ENCODE measurements at regions of chr20 and their contacts with region 1.

Region 1: GRCh38 chr20:59955132-59955796 is 3.0 kb upstream of the CDH26 start:
- DNase-seq: peak in 2 of 14 experiments; percentile 21 to 35
- ATAC-seq: no peak
- H3K4me3 ChIP-seq: no peak overlapping the region
- H3K4me3 Mint-ChIP-seq: no peak overlapping the region
- H3K27ac ChIP-seq: no peak overlapping the region
- H3K27ac Mint-ChIP-seq: no peak overlapping the region
- H3K4me1 ChIP-seq: no peaks in the 10 kb centered on the region
- H3K4me1 Mint-ChIP-seq: no peaks in the 10 kb centered on the region
- H3K27me3 ChIP-seq: no peaks in the 10 kb centered on the region
- H3K27me3 Mint-ChIP-seq: no peaks in the 10 kb centered on the region
- CTCF ChIP-seq: no peak

Region 2: GRCh38 chr20:59940174-59940971 is 14.9 kb before region 1 on chr20 and contains the starts of genes FAM217B and PPP1R3D:
- CTCF ChIA-PET with region 1: interaction called, 5 read pairs
- POLR2A ChIA-PET with region 1: interaction called, 33 read pairs
- intact Hi-C with region 1: no loop called
- DNase-seq: peak; percentile 72 to 95 (median 88)
- ATAC-seq: peak; percentile 97
- H3K4me3 ChIP-seq: peak within 1 kb of the TSS; percentile 70
- H3K4me3 Mint-ChIP-seq: peak within 1 kb of the TSS; percentile 99
- H3K27ac ChIP-seq: peak within 1 kb of the TSS; percentile 78 to 91
- H3K27ac Mint-ChIP-seq: peak within 1 kb of the TSS; percentile 99
- H3K4me1 ChIP-seq: peaks cover 23% of the 10 kb centered on the region
- H3K4me1 Mint-ChIP-seq: peaks cover 58% of the 10 kb centered on the region
- H3K27me3 ChIP-seq: no peaks in the 10 kb centered on the region
- H3K27me3 Mint-ChIP-seq: no peaks in the 10 kb centered on the region
- CTCF ChIP-seq: no peak
- total RNA-seq, gene FAM217B: 23.1 to 23.7 TPM
- total RNA-seq, gene PPP1R3D: 5.1 to 5.4 TPM

Region 3: DNA sequence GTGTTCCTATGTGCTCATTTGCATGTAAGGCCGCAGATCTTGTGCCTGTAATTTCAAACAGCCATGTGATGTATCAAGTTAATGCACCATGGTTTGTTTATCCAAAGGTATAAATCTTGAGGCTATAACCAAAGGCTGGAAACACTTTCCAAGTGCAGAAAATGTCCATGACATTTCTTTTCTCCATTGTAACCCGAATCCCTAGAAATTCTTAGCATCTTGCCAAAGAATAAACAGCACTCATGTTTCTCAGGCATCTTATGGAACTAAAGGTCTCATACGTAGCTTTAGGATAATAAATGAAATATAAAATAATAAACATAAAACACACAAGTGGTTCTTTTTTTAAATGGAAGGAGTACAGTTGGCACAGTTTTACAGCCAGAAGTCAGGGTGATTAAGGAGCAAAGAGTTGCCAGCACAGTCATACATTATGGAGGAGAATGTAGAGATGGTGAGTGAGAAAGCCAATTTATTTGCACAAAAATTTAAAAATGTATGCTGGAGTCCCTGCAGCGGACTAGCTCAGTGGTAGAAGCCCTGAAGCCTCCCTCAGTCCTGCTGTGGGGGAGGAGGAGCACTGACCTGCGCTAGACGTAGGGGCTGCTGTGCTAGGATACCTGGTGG is 21.0 kb after region 1 on chr20:
- CTCF ChIA-PET with region 1: no interaction called
- POLR2A ChIA-PET with region 1: no interaction called
- intact Hi-C with region 1: no loop called
- DNase-seq: no peak
- ATAC-seq: no peak
- H3K4me3 ChIP-seq: no peak overlapping the region
- H3K4me3 Mint-ChIP-seq: no peak overlapping the region
- H3K27ac ChIP-seq: no peak overlapping the region
- H3K27ac Mint-ChIP-seq: no peak overlapping the region
- H3K4me1 ChIP-seq: no peaks in the 10 kb centered on the region
- H3K4me1 Mint-ChIP-seq: no peaks in the 10 kb centered on the region
- H3K27me3 ChIP-seq: no peaks in the 10 kb centered on the region
- H3K27me3 Mint-ChIP-seq: no peaks in the 10 kb centered on the region
- CTCF ChIP-seq: no peak

Region 4: DNA sequence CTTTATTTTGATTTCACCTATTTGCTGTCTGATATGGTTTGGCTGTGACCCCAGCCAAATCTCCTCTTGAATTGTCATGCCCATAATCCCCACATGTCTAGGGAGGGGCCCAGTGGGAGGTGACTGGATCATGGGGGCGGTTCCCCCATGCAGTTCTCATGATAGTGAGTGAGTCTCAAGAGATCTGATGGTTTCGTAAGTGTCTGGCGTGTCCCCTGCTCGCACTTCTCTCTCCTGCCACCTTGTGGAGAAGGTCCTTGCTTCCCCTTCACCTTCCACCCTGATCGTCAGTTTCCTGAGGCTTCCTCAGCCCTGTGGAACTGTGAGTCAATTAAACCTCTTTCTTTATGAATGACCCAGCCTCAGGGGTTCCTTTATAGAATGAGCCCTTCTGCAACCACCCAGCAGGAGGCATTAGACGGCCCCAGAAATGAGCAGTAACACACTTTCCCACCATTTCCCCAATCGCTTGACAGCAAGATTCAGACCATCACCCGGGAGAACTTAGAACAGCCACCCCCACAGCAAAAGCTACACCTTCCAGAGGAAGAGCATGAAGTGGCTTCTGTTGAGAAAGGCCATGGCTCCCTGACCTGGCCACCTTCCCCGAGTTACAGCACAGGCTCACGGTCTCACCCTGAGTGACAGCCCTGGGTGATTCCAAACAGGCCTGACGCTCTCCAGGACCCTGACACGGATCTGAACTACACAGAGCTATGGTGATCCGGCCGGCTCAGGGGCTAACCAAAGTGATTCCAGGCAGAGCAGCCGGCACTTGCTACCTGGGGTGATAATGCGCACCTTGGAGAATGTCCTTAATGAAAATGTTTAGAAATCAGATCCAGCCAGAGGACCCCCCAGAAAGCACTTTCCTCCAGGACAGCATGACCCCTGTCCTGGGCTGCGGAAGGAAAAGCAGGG is 1165.6 kb after region 1 on chr20:
- CTCF ChIA-PET with region 1: no interaction called
- POLR2A ChIA-PET with region 1: no interaction called
- intact Hi-C with region 1: loop called in 1 of 2 experiments (anchors 5 kb)
- DNase-seq: peak in 6 of 14 experiments; percentile 6 to 58 (median 30)
- ATAC-seq: peak; percentile 56
- H3K4me3 ChIP-seq: no peak overlapping the region
- H3K4me3 Mint-ChIP-seq: no peak overlapping the region
- H3K27ac ChIP-seq: no peak overlapping the region
- H3K27ac Mint-ChIP-seq: no peak overlapping the region
- H3K4me1 ChIP-seq: no peaks in the 10 kb centered on the region
- H3K4me1 Mint-ChIP-seq: no peaks in the 10 kb centered on the region
- H3K27me3 ChIP-seq: peaks cover 0 to 2% of the 10 kb centered on the region in 2 experiments
- H3K27me3 Mint-ChIP-seq: peaks cover 5% of the 10 kb centered on the region
- CTCF ChIP-seq: peak; percentile 30